ENCODE measurements at regions of chr1 and their contacts with region 1.

Region 1: DNA sequence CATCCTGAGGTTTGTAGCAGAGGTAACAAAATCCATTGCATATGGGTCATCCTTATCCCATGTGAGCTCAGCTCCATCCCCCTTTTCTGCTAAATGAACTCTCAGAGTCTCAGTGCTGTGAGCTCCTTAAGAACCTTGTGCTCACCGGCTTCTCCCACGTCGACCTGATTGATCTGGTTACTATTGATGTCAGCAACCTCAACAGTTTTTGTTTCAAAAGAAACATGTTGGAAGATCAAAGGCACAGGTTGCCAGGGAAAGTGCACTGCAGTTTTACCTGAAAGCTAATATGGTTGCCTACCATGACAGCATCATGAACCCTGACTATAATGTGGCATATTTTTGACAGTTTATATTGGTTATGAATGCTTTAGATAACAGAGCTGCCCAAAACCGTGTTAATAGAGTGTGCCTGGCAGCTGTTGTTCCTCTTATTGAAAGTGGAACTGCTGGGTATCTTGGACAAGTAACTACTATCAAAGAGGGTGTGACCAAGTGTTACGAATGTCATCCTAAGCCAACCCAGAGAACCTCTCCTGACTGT is 131.4 kb downstream of the HS2ST1 start:
- DNase-seq: peak; percentile 52
- H3K4me3 Mint-ChIP-seq: peak overlapping the region; percentile 45
- H3K27ac Mint-ChIP-seq: peak overlapping the region; percentile 90
- H3K4me1 Mint-ChIP-seq: peaks cover 48% of the 10 kb centered on the region
- H3K27me3 Mint-ChIP-seq: no peaks in the 10 kb centered on the region

Region 2: GRCh38 chr1:86395771-86396497 is 649.9 kb before region 1 on chr1 and contains the start of gene ODF2L:
- intact Hi-C with region 1: loop called (anchors 10 kb)
- DNase-seq: peak; percentile 88
- H3K4me3 Mint-ChIP-seq: peak within 1 kb of the TSS; percentile 89
- H3K27ac Mint-ChIP-seq: peak within 1 kb of the TSS; percentile 85
- H3K4me1 Mint-ChIP-seq: peaks cover 33% of the 10 kb centered on the region
- H3K27me3 Mint-ChIP-seq: peaks cover 10% of the 10 kb centered on the region
- total RNA-seq, gene ODF2L: 21.8 and 22.5 TPM in 2 replicates

Region 3: GRCh38 chr1:86998727-86999126 is 47.1 kb before region 1 on chr1:
- intact Hi-C with region 1: loop called (anchors 2 kb)
- DNase-seq: no peak
- H3K4me3 Mint-ChIP-seq: no peak overlapping the region
- H3K27ac Mint-ChIP-seq: no peak overlapping the region
- H3K4me1 Mint-ChIP-seq: peaks cover 29% of the 10 kb centered on the region
- H3K27me3 Mint-ChIP-seq: no peaks in the 10 kb centered on the region

Region 4: GRCh38 chr1:87030740-87031690 is 14.8 kb before region 1 on chr1:
- intact Hi-C with region 1: no loop called
- DNase-seq: no peak
- H3K4me3 Mint-ChIP-seq: no peak overlapping the region
- H3K27ac Mint-ChIP-seq: no peak overlapping the region
- H3K4me1 Mint-ChIP-seq: peaks cover 9% of the 10 kb centered on the region
- H3K27me3 Mint-ChIP-seq: no peaks in the 10 kb centered on the region

Region 5: GRCh38 chr1:87061742-87062156 is 15.9 kb after region 1 on chr1:
- intact Hi-C with region 1: loop called (anchors 1 kb)
- DNase-seq: no peak
- H3K4me3 Mint-ChIP-seq: no peak overlapping the region
- H3K27ac Mint-ChIP-seq: peak overlapping the region; percentile 69
- H3K4me1 Mint-ChIP-seq: peaks cover 30% of the 10 kb centered on the region
- H3K27me3 Mint-ChIP-seq: no peaks in the 10 kb centered on the region

Region 6: DNA sequence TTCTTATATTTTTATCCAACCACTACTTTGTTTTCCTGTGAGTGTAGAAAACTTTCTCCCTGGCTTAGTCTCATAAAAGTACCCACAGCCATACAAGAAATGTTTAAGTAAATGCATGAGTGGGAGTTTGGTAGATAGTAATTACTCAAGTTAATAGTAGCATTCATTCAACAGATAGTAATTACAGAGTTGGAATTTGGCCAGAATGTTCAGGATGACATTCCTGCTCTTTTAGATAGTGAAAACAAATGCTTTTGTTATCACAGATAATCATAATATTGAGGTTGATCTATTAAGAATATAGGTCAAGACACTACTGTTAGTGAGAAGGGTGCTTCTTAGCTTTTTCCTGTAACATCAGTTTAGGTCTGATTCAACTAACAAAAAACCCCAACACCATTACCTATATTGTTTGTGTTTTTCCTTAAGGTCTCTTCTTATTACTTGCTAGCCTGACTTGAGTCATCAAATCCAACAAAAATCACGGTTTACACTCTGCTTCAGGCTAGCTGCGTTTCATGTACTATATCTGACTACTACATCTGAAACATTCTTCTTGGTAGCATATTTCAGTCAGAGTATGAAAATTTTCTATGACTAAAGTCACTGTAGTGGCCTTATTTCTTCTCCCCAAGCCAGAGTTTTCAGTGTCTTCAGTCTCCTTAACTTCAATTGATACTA is 32.3 kb after region 1 on chr1:
- intact Hi-C with region 1: loop called (anchors 1 kb)
- DNase-seq: no peak
- H3K4me3 Mint-ChIP-seq: no peak overlapping the region
- H3K27ac Mint-ChIP-seq: peak overlapping the region; percentile 87
- H3K4me1 Mint-ChIP-seq: peaks cover 29% of the 10 kb centered on the region
- H3K27me3 Mint-ChIP-seq: no peaks in the 10 kb centered on the region

Region 7: GRCh38 chr1:87328272-87329050 is 282.6 kb after region 1 on chr1 and contains the start of gene LMO4:
- intact Hi-C with region 1: loop called (anchors 5 kb)
- DNase-seq: peak; percentile 76
- H3K4me3 Mint-ChIP-seq: peak within 1 kb of the TSS; percentile 92
- H3K27ac Mint-ChIP-seq: peak within 1 kb of the TSS; percentile 89
- H3K4me1 Mint-ChIP-seq: peaks cover 32% of the 10 kb centered on the region
- H3K27me3 Mint-ChIP-seq: peaks cover 26% of the 10 kb centered on the region
- total RNA-seq, gene LMO4: 20.9 and 21.7 TPM in 2 replicates

Measured in activated T-helper 2 cell treated with anti-CD3 and anti-CD28 coated beads, Interferon-gamma antibody, Interleukin-2, Interleukin-4, amounts not matched to agents 10 μg/mL and 5 μg/mL and 100 μg/mL, durations not matched to agents 14 hours and 24 hours and 36 hours (primary cell).